ENCODE measurements at regions of chr20 and their contacts with region 1.

Region 1: GRCh38 chr20:53080969-53081871 is 109.1 kb downstream of the TSHZ2 start:
- DNase-seq: peak; percentile 99
- ATAC-seq: peak; percentile 90
- H3K4me3 ChIP-seq: peak overlapping the region; percentile 36 to 51 (median 40); a peak in 4 of 6 replicates
- H3K27ac ChIP-seq: peak overlapping the region; percentile 85
- H3K4me1 ChIP-seq: peaks cover 77% of the 10 kb centered on the region
- H3K27me3 ChIP-seq: no peaks in the 10 kb centered on the region
- CTCF ChIP-seq: no peak
- EP300 ChIP-seq: peak; percentile 80 to 95
- POLR2A ChIP-seq: peak in 1 of 2 experiments; percentile 42; a peak in 1 of 4 replicates
- RAD21 ChIP-seq: no peak

Region 2: GRCh38 chr20:52923123-52923937 is 157.9 kb before region 1 on chr20:
- CTCF ChIA-PET with region 1: no interaction called
- POLR2A ChIA-PET with region 1: interaction called, 15 read pairs
- in situ Hi-C with region 1: no loop called
- intact Hi-C with region 1: loop called (anchors 2 kb)
- DNase-seq: no peak
- ATAC-seq: no peak
- H3K4me3 ChIP-seq: no peak overlapping the region
- H3K27ac ChIP-seq: no peak overlapping the region
- H3K4me1 ChIP-seq: peaks cover 55% of the 10 kb centered on the region
- H3K27me3 ChIP-seq: no peaks in the 10 kb centered on the region
- CTCF ChIP-seq: no peak
- EP300 ChIP-seq: no peak
- POLR2A ChIP-seq: no peak
- RAD21 ChIP-seq: no peak

Region 3: GRCh38 chr20:52972190-52972937 is 108.9 kb before region 1 on chr20 and contains the start of gene TSHZ2:
- CTCF ChIA-PET with region 1: no interaction called
- POLR2A ChIA-PET with region 1: no interaction called
- in situ Hi-C with region 1: no loop called
- intact Hi-C with region 1: loop called (anchors 2 kb)
- DNase-seq: peak; percentile 24
- ATAC-seq: peak; percentile 86
- H3K4me3 ChIP-seq: peak within 1 kb of the TSS; percentile 35 to 68 (median 48)
- H3K27ac ChIP-seq: no peak within 1 kb of the TSS
- H3K4me1 ChIP-seq: peaks cover 14% of the 10 kb centered on the region
- H3K27me3 ChIP-seq: peaks cover 0 to 40% of the 10 kb centered on the region in 2 experiments; a peak in 3 of 5 replicates
- CTCF ChIP-seq: no peak
- EP300 ChIP-seq: no peak
- POLR2A ChIP-seq: no peak
- RAD21 ChIP-seq: no peak
- total RNA-seq, gene TSHZ2: not detected in 2 replicates

Region 4: GRCh38 chr20:53092772-53093300 is 11.6 kb after region 1 on chr20:
- CTCF ChIA-PET with region 1: no interaction called
- POLR2A ChIA-PET with region 1: interaction called, 23 read pairs
- in situ Hi-C with region 1: no loop called
- intact Hi-C with region 1: no loop called
- DNase-seq: no peak
- ATAC-seq: peak; percentile 76
- H3K4me3 ChIP-seq: no peak overlapping the region
- H3K27ac ChIP-seq: no peak overlapping the region
- H3K4me1 ChIP-seq: peaks cover 24% of the 10 kb centered on the region
- H3K27me3 ChIP-seq: peaks cover 0 to 4% of the 10 kb centered on the region in 2 experiments; a peak in 1 of 5 replicates
- CTCF ChIP-seq: no peak
- EP300 ChIP-seq: no peak
- POLR2A ChIP-seq: no peak
- RAD21 ChIP-seq: no peak

Region 5: DNA sequence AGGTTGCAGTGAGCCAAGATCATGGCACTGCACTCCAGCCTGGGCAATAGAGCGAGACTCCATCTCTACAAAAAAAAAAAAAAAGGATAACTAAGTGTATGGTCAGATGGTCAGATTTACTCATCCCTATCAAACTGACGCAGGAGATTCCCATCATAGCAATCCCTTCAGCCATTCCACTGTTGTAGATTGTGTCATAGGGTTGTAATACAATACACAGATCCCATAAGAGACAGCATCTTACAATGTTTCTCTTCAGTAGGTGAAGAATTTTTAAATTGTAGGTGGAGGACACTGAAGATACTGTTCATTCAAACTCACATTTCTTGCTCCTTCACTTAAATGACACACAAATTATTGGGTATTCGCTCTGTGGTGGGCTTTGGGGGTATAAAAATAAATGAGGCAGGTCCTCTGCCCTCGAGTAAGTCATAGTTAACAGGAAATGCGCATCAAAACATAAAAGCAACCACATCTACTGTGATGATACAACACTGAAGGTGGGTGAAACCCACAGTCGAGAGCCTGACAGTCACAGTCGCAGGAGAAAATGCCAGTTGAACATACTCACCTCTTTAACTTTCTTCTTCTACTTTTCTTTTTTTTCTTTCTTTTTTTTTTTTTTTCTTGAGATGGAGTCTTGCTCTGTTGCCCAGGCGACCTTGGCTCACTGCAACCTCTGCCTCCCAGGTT is 306.9 kb after region 1 on chr20:
- CTCF ChIA-PET with region 1: no interaction called
- POLR2A ChIA-PET with region 1: no interaction called
- in situ Hi-C with region 1: no loop called
- intact Hi-C with region 1: no loop called
- DNase-seq: no peak
- ATAC-seq: no peak
- H3K4me3 ChIP-seq: no peak overlapping the region
- H3K27ac ChIP-seq: no peak overlapping the region
- H3K4me1 ChIP-seq: no peaks in the 10 kb centered on the region
- H3K27me3 ChIP-seq: peaks cover 4 to 21% of the 10 kb centered on the region in 2 experiments; a peak in 2 of 5 replicates
- CTCF ChIP-seq: no peak
- EP300 ChIP-seq: no peak
- POLR2A ChIP-seq: no peak
- RAD21 ChIP-seq: no peak

Region 6: DNA sequence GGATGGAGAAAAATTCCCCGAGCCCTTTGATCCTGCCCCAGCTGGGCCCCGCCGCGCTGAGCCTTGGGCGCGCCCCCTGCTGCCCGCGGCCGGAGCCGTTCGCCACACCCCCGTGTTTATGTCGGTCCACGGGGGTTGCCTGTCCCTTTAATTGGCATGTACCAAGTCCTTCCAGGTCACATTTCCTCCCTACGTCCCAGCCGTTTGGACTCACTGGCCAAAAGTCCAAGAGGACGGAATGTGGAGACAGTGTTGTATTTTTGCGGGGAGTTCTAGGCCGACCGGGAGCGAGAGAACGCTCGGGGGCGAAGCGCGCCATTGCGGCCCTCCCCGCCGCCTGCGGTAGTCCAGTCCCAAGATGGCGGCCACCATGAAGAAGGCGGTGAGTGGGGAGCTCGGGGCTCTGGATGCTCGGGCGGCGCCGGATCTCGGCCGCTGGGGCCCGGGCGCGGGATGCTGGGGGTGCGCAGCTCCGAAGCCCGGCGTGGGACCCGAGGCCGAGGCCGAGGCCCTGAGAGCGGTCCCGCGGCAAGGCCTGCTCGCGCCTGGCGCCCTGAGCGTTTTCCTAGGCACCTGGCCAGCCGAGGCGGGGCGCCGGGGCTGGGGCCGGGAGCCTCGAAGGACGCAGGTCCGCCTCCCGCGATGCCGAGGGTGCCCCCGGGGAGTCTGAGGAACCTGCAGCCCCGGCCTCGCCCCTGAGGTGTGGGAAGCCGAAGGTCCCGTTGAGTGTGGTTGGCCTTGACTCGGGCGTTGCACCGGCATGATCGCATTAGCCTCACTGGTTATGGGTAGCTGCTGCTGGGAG is 1126.7 kb after region 1 on chr20 and contains the start of gene PFDN4:
- CTCF ChIA-PET with region 1: no interaction called
- POLR2A ChIA-PET with region 1: no interaction called
- in situ Hi-C with region 1: loop called (anchors 25 kb)
- intact Hi-C with region 1: no loop called
- DNase-seq: peak; percentile 88
- ATAC-seq: peak; percentile 95
- H3K4me3 ChIP-seq: peak within 1 kb of the TSS; percentile 77 to 100 (median 82)
- H3K27ac ChIP-seq: peak within 1 kb of the TSS; percentile 97
- H3K4me1 ChIP-seq: peaks cover 50% of the 10 kb centered on the region
- H3K27me3 ChIP-seq: peaks cover 0 to 6% of the 10 kb centered on the region in 2 experiments; a peak in 1 of 5 replicates
- CTCF ChIP-seq: peak; percentile 99
- EP300 ChIP-seq: peak; percentile 43 to 61; a peak in 3 of 4 replicates
- POLR2A ChIP-seq: peak; percentile 59 to 80; a peak in 3 of 4 replicates
- RAD21 ChIP-seq: peak; percentile 63
- total RNA-seq, gene PFDN4: 227 and 299 TPM in 2 replicates